ENCODE measurements at regions of chr17 and their contacts with region 1.

Region 1: GRCh38 chr17:1516388-1517161 is at the start of gene INPP5K:
- DNase-seq: peak; percentile 94
- ATAC-seq: peak; percentile 97
- H3K4me3 ChIP-seq: peak within 1 kb of the TSS; percentile 87
- H3K27ac ChIP-seq: peak within 1 kb of the TSS; percentile 79
- H3K4me1 ChIP-seq: peaks cover 4% of the 10 kb centered on the region
- H3K27me3 ChIP-seq: no peaks in the 10 kb centered on the region
- CTCF ChIP-seq: peak in 1 of 3 experiments; percentile 3; a peak in 1 of 6 replicates
- EP300 ChIP-seq: no peak
- POLR2A ChIP-seq: peak; percentile 91
- RAD21 ChIP-seq: no peak
- polyA plus RNA-seq, gene INPP5K: 0.58 to 1.5 TPM

Region 2: DNA sequence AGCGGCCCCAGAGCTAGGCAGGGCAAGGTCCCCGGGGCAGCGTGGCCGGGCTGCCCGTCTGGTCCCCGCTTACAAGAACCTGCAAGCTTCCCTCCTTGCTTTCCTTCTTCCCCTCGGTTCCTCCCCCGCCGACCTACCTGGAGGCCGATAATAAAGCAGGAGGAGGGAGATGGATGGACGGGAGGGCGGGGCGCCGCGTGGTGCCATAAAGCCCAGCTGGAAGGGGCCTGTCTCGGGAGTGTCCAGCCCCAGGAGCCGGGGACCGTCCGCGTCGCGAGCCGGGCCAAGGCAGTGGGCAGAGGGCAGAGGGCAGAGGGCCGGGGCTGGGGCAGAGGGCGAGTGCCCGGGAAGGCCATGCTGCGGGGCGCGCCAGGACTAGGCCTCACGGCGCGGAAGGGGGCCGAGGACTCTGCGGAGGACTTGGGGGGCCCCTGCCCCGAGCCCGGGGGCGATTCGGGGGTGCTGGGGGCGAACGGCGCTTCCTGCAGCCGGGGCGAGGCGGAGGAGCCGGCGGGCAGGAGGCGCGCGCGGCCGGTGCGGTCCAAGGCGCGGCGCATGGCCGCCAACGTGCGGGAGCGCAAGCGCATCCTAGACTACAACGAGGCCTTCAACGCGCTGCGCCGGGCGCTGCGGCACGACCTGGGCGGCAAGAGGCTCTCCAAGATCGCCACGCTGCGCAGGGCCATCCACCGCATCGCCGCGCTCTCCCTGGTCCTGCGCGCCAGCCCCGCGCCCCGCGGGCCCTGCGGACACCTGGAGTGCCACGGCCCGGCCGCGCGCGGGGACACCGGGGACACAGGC is 246.2 kb before region 1 on chr17 and contains the start of gene BHLHA9:
- CTCF ChIA-PET with region 1: interaction called, 4 read pairs
- POLR2A ChIA-PET with region 1: interaction called, 7 read pairs
- RAD21 ChIA-PET with region 1: interaction called, 5 read pairs
- SMC1A ChIA-PET with region 1: interaction called, 3 read pairs
- in situ Hi-C with region 1: loop called (anchors 5 kb)
- intact Hi-C with region 1: no loop called
- DNase-seq: no peak
- ATAC-seq: no peak
- H3K4me3 ChIP-seq: no peak within 1 kb of the TSS
- H3K27ac ChIP-seq: no peak within 1 kb of the TSS
- H3K4me1 ChIP-seq: peaks cover 4% of the 10 kb centered on the region
- H3K27me3 ChIP-seq: no peaks in the 10 kb centered on the region; a peak in 1 of 4 replicates
- CTCF ChIP-seq: no peak
- EP300 ChIP-seq: no peak
- POLR2A ChIP-seq: no peak
- RAD21 ChIP-seq: no peak
- polyA plus RNA-seq, gene BHLHA9: not detected

Region 3: GRCh38 chr17:1331708-1332107 is 184.9 kb before region 1 on chr17:
- CTCF ChIA-PET with region 1: interaction called, 8 read pairs
- POLR2A ChIA-PET with region 1: no interaction called
- RAD21 ChIA-PET with region 1: interaction called, 15 read pairs
- SMC1A ChIA-PET with region 1: interaction called, 11 read pairs
- in situ Hi-C with region 1: no loop called
- intact Hi-C with region 1: no loop called
- DNase-seq: no peak
- ATAC-seq: no peak
- H3K4me3 ChIP-seq: no peak overlapping the region
- H3K27ac ChIP-seq: no peak overlapping the region
- H3K4me1 ChIP-seq: no peaks in the 10 kb centered on the region
- H3K27me3 ChIP-seq: no peaks in the 10 kb centered on the region; a peak in 1 of 4 replicates
- CTCF ChIP-seq: no peak
- EP300 ChIP-seq: no peak
- POLR2A ChIP-seq: no peak
- RAD21 ChIP-seq: no peak

Region 4: GRCh38 chr17:1390433-1391367 is 125.9 kb before region 1 on chr17:
- CTCF ChIA-PET with region 1: interaction called, 7 read pairs
- POLR2A ChIA-PET with region 1: no interaction called
- RAD21 ChIA-PET with region 1: interaction called, 11 read pairs
- SMC1A ChIA-PET with region 1: interaction called, 10 read pairs
- in situ Hi-C with region 1: no loop called
- intact Hi-C with region 1: no loop called
- DNase-seq: no peak
- ATAC-seq: no peak
- H3K4me3 ChIP-seq: 0 out of 2 replicates have a peak overlapping the region, but pooled peaks have one; percentile 5
- H3K27ac ChIP-seq: no peak overlapping the region
- H3K4me1 ChIP-seq: no peaks in the 10 kb centered on the region; the same call in 1 of the 2 replicates
- H3K27me3 ChIP-seq: no peaks in the 10 kb centered on the region
- CTCF ChIP-seq: no peak
- EP300 ChIP-seq: no peak
- POLR2A ChIP-seq: no peak
- RAD21 ChIP-seq: no peak

Region 5: GRCh38 chr17:1474402-1475189 is 42.0 kb before region 1 on chr17:
- CTCF ChIA-PET with region 1: interaction called, 13 read pairs
- POLR2A ChIA-PET with region 1: interaction called, 4 read pairs
- RAD21 ChIA-PET with region 1: interaction called, 9 read pairs
- SMC1A ChIA-PET with region 1: interaction called, 5 read pairs
- in situ Hi-C with region 1: no loop called
- intact Hi-C with region 1: no loop called
- DNase-seq: peak; percentile 67
- ATAC-seq: peak; percentile 87
- H3K4me3 ChIP-seq: peak overlapping the region; percentile 63
- H3K27ac ChIP-seq: peak overlapping the region; percentile 54
- H3K4me1 ChIP-seq: peaks cover 27% of the 10 kb centered on the region
- H3K27me3 ChIP-seq: no peaks in the 10 kb centered on the region
- CTCF ChIP-seq: no peak
- EP300 ChIP-seq: peak in 1 of 2 experiments; percentile 59; a peak in 2 of 4 replicates
- POLR2A ChIP-seq: peak; percentile 66
- RAD21 ChIP-seq: no peak

Region 6: DNA sequence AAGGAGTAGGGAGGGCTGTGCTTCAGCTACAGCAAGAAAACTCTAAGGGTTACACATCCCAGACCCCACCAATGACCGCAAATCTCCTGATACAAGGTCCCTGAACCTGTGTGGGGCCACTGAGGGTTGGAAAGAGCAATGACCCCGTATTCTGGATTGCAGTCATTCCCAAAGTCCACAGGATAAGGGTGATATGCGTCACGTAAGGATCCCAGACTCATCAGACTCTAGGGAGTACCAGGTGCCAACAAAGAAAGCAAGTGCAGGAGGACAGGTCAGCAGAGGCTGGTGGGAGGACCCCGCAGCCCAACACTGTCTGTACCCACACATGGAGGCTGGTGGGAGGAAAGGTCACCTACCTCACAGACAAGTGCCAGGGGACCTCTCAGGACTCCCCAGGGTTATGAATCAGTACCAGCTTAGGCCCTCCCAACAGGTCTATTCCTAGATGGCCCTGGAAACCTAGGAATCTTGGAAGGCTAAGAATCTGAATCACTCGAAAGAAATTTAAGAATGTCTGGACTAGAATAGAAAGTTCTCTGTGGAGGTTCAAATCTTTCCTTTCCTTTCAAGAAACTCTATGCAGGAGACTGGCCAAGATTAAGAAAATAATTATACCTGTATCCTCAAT is 29.8 kb after region 1 on chr17:
- CTCF ChIA-PET with region 1: no interaction called
- POLR2A ChIA-PET with region 1: no interaction called
- RAD21 ChIA-PET with region 1: no interaction called
- SMC1A ChIA-PET with region 1: no interaction called
- in situ Hi-C with region 1: no loop called
- intact Hi-C with region 1: no loop called
- DNase-seq: no peak
- ATAC-seq: no peak
- H3K4me3 ChIP-seq: no peak overlapping the region
- H3K27ac ChIP-seq: no peak overlapping the region
- H3K4me1 ChIP-seq: no peaks in the 10 kb centered on the region
- H3K27me3 ChIP-seq: no peaks in the 10 kb centered on the region
- CTCF ChIP-seq: no peak
- EP300 ChIP-seq: no peak
- POLR2A ChIP-seq: no peak
- RAD21 ChIP-seq: no peak

Region 7: GRCh38 chr17:1628856-1629646 is 112.5 kb after region 1 on chr17:
- CTCF ChIA-PET with region 1: interaction called, 27 read pairs
- POLR2A ChIA-PET with region 1: interaction called, 5 read pairs
- RAD21 ChIA-PET with region 1: interaction called, 29 read pairs
- SMC1A ChIA-PET with region 1: interaction called, 32 read pairs
- in situ Hi-C with region 1: no loop called
- intact Hi-C with region 1: loop called (anchors 5 kb)
- DNase-seq: no peak
- ATAC-seq: peak; percentile 84
- H3K4me3 ChIP-seq: peak overlapping the region; percentile 88
- H3K27ac ChIP-seq: peak overlapping the region; percentile 87
- H3K4me1 ChIP-seq: peaks cover 42% of the 10 kb centered on the region
- H3K27me3 ChIP-seq: no peaks in the 10 kb centered on the region
- CTCF ChIP-seq: peak in 2 of 3 experiments; percentile 30 to 51; a peak in 4 of 6 replicates
- EP300 ChIP-seq: no peak
- POLR2A ChIP-seq: peak; percentile 70
- RAD21 ChIP-seq: peak; percentile 40; the same call in 1 of the 2 replicates

Measured in GM12878 (cell line).